ENCODE measurements at regions of chr4 and their contacts with region 1.

Region 1: DNA sequence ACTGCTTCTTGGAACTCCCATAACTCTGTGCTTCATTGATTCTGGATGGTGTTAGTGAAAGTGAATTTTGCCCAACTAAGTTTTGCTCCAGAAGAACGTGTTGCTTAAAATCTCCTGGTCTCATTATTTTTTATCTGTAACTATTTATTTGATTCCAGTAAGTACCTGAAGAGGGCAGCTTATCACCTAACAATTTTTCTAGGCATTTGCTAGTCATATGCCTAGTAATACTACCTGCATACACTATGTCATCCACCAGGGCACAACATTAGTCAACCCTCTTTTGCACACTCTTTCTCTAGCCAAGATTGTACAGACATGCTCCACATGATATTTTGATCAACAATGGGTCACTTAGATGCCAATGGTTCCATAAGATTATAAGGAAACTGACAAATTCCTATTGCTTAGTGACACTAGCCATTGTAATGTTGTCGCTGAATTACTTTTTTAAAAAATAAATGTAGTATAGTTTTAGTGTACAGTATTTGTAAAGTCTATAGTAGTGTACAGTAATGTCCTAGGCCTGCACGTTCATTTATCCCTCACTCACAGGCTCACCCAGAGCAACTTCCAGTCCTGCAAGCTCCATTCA is 499.9 kb upstream of the AADAT start:
- DNase-seq: peak; percentile 68
- ATAC-seq: peak; percentile 40; the same call in 1 of the 2 replicates
- H3K4me3 ChIP-seq: no peak overlapping the region
- H3K27ac ChIP-seq: no peak overlapping the region
- H3K4me1 ChIP-seq: no peaks in the 10 kb centered on the region
- H3K27me3 ChIP-seq: no peaks in the 10 kb centered on the region
- CTCF ChIP-seq: no peak; the same call in 1 of the 2 replicates

Region 2: DNA sequence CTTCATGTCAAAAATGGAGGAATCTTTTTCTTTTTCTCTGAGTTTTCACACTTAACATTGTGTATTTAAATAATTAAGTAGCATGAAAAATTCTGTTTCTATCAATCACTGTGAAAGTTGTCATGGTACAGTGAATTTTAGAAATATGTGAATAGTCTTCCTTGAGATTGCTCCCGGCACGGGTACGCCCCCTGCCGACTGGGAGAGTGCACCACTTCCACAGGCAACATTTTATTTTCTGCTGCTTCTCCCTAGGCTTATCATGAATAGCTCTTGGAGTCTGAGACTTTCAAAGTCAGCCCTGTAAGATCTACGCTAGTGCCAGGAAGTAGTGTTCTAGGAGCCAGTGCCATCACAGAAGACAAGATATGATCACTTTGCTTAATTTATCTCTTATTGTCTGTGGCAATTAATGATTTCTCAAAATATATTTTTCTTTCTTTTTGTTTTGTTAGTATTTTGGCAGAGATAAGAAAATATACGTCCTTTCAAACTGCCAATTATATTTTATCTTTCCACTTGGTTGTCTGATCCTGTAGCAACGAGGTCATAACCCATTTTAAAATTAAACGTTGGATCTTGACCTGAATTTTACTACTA is 263.8 kb after region 1 on chr4:
- CTCF ChIA-PET with region 1: no interaction called
- POLR2A ChIA-PET with region 1: no interaction called
- intact Hi-C with region 1: loop called (anchors 1 kb)
- DNase-seq: peak; percentile 59
- ATAC-seq: no peak; the same call in 1 of the 2 replicates
- H3K4me3 ChIP-seq: no peak overlapping the region
- H3K27ac ChIP-seq: no peak overlapping the region
- H3K4me1 ChIP-seq: no peaks in the 10 kb centered on the region
- H3K27me3 ChIP-seq: no peaks in the 10 kb centered on the region
- CTCF ChIP-seq: peak; percentile 75